Endothelial cell of umbilical vein (primary cell): ENCODE measurements at regions of chr1 and their contacts with region 1.

Region 1: GRCh38 chr1:23634842-23635651 is 56.6 kb upstream of the RPL11 start:
- DNase-seq: peak; percentile 83
- H3K4me3 ChIP-seq: peak overlapping the region; percentile 24 to 78 (median 41)
- H3K27ac ChIP-seq: peak overlapping the region; percentile 67
- H3K4me1 ChIP-seq: no peaks in the 10 kb centered on the region
- H3K27me3 ChIP-seq: peaks cover 0 to 4% of the 10 kb centered on the region in 2 experiments
- CTCF ChIP-seq: peak; percentile 85 to 93
- POLR2A ChIP-seq: no peak

Region 2: DNA sequence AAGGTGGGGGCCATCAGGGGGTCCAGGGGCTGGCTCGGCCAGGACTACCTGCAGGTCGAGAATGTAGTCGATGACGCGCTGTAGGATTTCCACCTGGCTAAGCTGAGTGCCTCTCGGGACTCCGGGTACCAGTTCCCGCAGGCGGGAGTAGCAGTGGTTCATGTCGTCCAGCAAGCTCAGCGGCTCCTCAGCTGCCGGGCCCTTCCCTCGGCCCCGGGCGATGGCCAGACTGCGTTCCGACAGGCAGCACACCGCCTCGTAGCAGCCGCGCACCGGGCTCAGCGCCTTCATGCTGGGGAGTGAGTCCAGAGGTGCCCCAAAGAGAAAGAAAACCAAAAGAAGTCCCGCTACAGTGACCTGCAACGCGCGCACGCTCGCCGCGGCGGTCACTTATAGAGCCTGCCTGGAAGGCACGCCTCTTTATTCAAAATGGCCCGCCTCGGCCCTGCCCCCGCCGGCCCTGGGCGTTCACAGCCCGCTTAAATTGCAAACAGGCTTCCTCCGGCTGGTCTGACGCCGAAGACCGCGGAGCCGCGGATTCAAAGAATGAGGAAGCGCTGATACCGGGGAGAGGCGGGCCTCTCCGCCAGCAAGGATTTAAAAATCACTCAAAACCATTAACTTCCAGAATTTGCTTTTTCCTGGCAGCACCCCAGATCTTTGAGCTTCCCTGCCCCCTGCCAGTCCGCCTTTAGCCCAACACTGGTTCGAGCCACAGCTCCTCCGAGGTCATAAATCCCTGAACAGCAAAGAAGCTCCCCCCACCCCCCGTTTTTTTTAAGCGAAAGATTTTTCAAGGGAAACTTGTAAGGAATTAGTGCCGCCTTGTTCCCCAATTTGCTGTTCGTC is 75.7 kb before region 1 on chr1 and contains the start of gene ID3:
- CTCF ChIA-PET with region 1: interaction called, 1,069 read pairs
- POLR2A ChIA-PET with region 1: interaction called, 12 read pairs
- dilution Hi-C with region 1: no loop called
- intact Hi-C with region 1: loop called (anchors 1 kb)
- DNase-seq: peak; percentile 98
- H3K4me3 ChIP-seq: peak within 1 kb of the TSS; percentile 69 to 94 (median 89)
- H3K27ac ChIP-seq: peak within 1 kb of the TSS; percentile 99
- H3K4me1 ChIP-seq: peaks cover 56% of the 10 kb centered on the region
- H3K27me3 ChIP-seq: no peaks in the 10 kb centered on the region
- CTCF ChIP-seq: no peak
- POLR2A ChIP-seq: peak; percentile 100
- total RNA-seq, gene ID3: 277 and 310 TPM in 2 replicates

Region 3: DNA sequence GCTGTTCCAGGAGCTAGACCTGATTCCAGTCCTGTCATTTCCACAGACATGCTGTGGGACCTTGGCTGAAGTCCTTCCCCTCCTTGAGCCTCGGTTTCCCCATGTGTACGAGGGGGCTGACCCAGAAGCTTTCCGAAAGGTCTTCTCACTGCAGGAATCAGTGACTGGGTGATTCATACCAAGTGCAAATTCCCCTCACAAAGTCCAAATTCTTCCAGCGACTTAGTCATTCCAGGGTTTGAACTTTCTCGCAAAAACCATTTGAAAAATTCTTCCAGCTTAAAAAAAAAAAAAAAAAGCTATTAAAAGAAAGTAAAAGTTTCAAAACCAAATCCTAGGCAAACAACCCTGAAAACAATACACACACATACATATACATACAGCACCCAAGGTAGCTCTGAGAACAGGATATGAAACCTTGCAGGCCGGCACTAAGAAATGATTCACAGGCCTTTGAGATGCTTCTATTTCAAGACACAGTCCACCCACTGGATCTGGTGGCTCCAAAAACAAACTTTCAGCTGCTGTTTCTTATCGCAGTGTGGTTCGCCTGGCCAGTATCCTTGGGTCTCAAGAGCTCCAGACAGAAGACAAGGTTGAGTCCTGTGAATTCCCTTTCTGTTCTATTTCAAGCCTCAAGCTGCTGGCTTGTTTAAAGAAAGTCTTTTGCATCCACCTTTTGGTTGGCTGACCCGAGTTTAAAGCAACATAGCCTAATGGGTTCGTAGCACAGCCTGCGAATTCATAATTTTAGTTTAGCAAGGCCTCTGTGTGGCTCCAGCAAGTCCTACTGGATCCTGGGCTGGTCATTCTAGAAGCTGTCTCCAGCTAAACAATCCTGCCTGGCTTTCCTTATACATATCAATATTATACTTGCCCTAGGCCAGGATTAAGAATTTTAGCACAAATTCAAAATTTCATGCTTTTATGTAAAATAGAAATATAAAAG is 57.7 kb before region 1 on chr1:
- CTCF ChIA-PET with region 1: interaction called, 25 read pairs
- POLR2A ChIA-PET with region 1: no interaction called
- dilution Hi-C with region 1: no loop called
- intact Hi-C with region 1: no loop called
- DNase-seq: peak; percentile 74
- H3K4me3 ChIP-seq: no peak overlapping the region
- H3K27ac ChIP-seq: peak overlapping the region; percentile 60
- H3K4me1 ChIP-seq: peaks cover 18% of the 10 kb centered on the region
- H3K27me3 ChIP-seq: no peaks in the 10 kb centered on the region
- CTCF ChIP-seq: no peak
- POLR2A ChIP-seq: no peak

Region 4: DNA sequence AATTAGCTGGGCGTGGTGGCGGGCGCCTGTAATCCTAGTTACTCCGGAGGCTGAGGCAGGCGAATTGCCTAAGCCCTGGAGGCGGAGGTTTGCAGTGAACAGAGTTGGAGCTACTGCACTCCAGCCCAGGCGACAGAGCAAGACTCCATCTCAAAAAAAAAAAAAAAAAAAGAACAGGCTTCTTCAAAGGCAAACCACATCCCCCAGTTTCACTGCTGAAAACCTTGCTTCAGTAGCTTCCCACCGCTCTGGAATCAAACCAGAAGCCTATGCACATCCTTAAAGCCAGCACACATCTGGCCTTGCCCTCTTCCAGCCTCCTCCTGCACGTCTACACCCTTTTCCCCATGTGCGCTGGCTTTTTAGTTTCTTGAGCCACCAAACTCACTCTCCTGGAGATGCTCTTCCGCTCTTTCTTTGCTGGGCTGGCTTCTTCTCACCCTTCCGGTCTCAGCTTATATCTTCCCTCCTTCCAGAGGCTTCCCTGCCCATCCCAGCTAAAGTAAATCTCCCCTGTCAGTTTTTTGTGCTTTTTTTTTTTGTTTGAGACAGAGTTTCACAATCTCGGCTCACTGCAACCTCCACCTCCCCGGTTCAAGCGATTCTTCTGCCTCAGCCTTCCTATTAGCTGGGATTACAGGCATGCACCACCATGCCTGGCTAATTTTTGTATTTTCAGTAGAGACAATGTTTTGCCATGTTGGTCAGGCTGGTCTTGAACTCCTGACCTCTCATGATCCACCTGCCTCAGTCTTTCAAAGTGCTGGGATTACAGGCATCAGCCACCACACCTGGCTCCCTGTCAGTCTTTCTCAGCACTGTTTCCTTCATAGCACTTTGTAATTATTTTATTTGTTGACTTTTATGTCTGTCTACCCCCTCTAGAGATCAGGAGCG is 33.7 kb before region 1 on chr1:
- CTCF ChIA-PET with region 1: interaction called, 13 read pairs
- POLR2A ChIA-PET with region 1: no interaction called
- dilution Hi-C with region 1: no loop called
- intact Hi-C with region 1: no loop called
- DNase-seq: no peak
- H3K4me3 ChIP-seq: no peak overlapping the region
- H3K27ac ChIP-seq: no peak overlapping the region
- H3K4me1 ChIP-seq: no peaks in the 10 kb centered on the region
- H3K27me3 ChIP-seq: peaks cover 2% of the 10 kb centered on the region in 2 experiments
- CTCF ChIP-seq: no peak
- POLR2A ChIP-seq: no peak

Region 5: GRCh38 chr1:23651069-23651808 is 16.2 kb after region 1 on chr1:
- CTCF ChIA-PET with region 1: interaction called, 11 read pairs
- POLR2A ChIA-PET with region 1: no interaction called
- dilution Hi-C with region 1: no loop called
- intact Hi-C with region 1: no loop called
- DNase-seq: peak; percentile 41
- H3K4me3 ChIP-seq: no peak overlapping the region
- H3K27ac ChIP-seq: no peak overlapping the region
- H3K4me1 ChIP-seq: no peaks in the 10 kb centered on the region
- H3K27me3 ChIP-seq: peaks cover 7 to 13% of the 10 kb centered on the region in 2 experiments
- CTCF ChIP-seq: no peak
- POLR2A ChIP-seq: no peak

Region 6: GRCh38 chr1:23889074-23889473 is 254.0 kb after region 1 on chr1:
- CTCF ChIA-PET with region 1: no interaction called
- POLR2A ChIA-PET with region 1: no interaction called
- dilution Hi-C with region 1: no loop called
- intact Hi-C with region 1: no loop called
- DNase-seq: no peak
- H3K4me3 ChIP-seq: no peak overlapping the region
- H3K27ac ChIP-seq: no peak overlapping the region
- H3K4me1 ChIP-seq: no peaks in the 10 kb centered on the region
- H3K27me3 ChIP-seq: peaks cover 0 to 2% of the 10 kb centered on the region in 2 experiments
- CTCF ChIP-seq: no peak
- POLR2A ChIP-seq: no peak

Region 7: DNA sequence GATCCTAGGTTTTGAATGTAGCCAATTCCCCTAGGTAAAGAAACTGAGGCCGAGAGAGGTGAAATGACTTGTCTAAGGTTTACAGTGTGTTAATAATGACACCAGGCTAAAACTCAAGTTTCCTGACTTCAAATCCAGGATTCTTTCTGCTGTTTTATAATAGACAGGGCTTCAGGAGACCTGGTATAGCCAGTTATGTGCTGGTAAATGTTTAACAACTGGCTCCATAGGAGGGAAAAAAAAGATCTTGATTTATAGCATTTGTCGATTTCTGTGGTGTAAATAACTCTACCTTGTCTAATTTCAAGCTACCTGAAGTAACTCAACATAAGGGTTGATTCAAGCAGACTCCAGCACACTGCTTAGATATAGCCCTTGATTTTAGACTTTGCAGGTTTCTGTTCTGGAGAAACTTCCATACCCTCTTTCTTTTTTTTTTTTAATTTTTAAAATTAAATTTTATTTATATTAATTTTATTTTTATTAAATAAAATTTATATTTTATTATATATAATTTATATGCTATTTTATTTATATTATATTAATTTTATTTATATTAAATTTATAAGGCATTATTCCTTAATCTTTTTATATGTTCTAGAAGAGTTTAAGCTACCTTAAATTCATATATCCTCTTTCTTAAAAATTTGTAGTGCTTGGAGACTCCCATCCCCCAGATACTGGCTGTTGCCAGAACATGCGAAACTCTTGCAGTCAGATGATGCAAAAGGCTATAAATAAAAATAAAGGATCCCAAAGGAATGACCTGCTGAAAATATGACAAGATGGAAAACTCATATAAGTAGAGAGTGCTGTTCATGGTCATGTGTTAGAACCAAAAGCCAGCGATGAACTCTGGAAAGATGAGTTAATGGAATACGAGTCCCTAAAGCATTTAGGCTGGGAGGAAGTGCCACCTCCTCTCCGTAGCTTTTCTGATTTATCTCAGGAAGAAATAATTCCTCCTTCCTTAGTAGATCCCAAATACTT is 380.5 kb after region 1 on chr1:
- CTCF ChIA-PET with region 1: no interaction called
- POLR2A ChIA-PET with region 1: no interaction called
- dilution Hi-C with region 1: no loop called
- intact Hi-C with region 1: no loop called
- DNase-seq: no peak
- H3K4me3 ChIP-seq: no peak overlapping the region
- H3K27ac ChIP-seq: no peak overlapping the region
- H3K4me1 ChIP-seq: peaks cover 6% of the 10 kb centered on the region
- H3K27me3 ChIP-seq: no peaks in the 10 kb centered on the region
- CTCF ChIP-seq: no peak
- POLR2A ChIP-seq: no peak